CD4-positive, alpha-beta T cell (primary cell): ENCODE measurements at regions of chr9 and their contacts with region 1.

Region 1: GRCh38 chr9:76188286-76188685 is 205.9 kb downstream of the RFK start:
- DNase-seq: no peak
- ATAC-seq: no peak
- H3K4me3 ChIP-seq: no peak overlapping the region
- H3K4me3 Mint-ChIP-seq: no peak overlapping the region
- H3K27ac ChIP-seq: no peak overlapping the region
- H3K27ac Mint-ChIP-seq: no peak overlapping the region
- H3K4me1 ChIP-seq: no peaks in the 10 kb centered on the region
- H3K4me1 Mint-ChIP-seq: no peaks in the 10 kb centered on the region
- H3K27me3 ChIP-seq: no peaks in the 10 kb centered on the region
- H3K27me3 Mint-ChIP-seq: no peaks in the 10 kb centered on the region
- CTCF ChIP-seq: no peak

Region 2: DNA sequence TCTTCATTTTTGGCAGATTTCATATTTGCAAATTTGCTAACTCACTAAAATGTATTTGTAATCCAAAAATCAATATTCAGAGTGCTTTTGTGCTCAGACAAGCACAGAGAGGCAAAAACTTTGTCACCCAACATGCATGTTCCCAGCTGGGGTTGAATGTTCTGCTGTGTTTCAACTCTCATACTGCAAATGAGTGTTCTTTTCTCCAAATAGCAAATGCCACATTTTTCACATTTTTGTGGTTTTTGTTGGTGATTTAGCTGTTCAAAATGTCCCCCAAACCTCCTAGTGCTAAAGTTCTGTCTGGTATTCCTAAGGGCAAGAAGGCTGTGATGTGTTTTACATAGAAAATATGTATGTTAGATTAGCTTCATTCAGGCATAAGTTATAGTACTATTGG is 385.2 kb before region 1 on chr9:
- CTCF ChIA-PET with region 1: no interaction called
- POLR2A ChIA-PET with region 1: no interaction called
- intact Hi-C with region 1: no loop called
- DNase-seq: no peak
- ATAC-seq: no peak
- H3K4me3 ChIP-seq: no peak overlapping the region
- H3K4me3 Mint-ChIP-seq: no peak overlapping the region
- H3K27ac ChIP-seq: no peak overlapping the region
- H3K27ac Mint-ChIP-seq: no peak overlapping the region
- H3K4me1 ChIP-seq: no peaks in the 10 kb centered on the region
- H3K4me1 Mint-ChIP-seq: no peaks in the 10 kb centered on the region
- H3K27me3 ChIP-seq: no peaks in the 10 kb centered on the region
- H3K27me3 Mint-ChIP-seq: peaks cover 10% of the 10 kb centered on the region
- CTCF ChIP-seq: no peak

Region 3: DNA sequence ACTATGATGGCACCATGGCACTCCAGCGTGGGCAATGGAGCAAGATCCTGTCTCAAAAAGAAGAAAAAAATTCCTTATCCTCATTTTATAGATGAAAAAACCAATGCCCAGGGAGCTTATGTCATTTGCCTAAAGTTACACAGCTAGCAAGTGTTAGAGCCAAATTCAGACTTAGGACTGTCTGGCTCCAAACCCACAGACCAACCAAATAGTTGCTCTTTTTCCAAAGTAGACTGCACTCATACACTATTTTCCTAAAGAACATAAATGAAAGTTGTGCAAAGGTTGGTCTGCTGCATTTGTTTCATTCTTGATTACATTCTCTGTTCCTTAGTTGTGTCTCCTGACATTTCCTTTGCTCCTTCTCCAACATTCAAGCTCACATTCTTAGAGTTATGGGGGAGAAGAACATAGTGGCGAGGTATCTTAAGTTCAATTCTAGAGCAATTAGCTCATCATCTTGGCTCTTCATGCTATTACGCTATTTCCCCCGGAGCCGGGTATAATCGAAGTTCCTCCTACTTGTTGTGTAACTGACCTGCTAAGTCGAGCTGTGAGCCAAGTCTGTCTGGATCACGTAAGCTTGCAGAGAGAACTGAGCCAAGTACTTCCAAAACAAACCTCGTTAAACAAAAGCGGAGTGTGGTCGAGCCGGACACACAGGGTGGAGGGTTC is 67.6 kb after region 1 on chr9:
- CTCF ChIA-PET with region 1: no interaction called
- POLR2A ChIA-PET with region 1: no interaction called
- intact Hi-C with region 1: loop called in 1 of 2 experiments (anchors 2 kb)
- DNase-seq: peak in 1 of 14 experiments; percentile 6
- ATAC-seq: no peak
- H3K4me3 ChIP-seq: no peak overlapping the region
- H3K4me3 Mint-ChIP-seq: no peak overlapping the region
- H3K27ac ChIP-seq: no peak overlapping the region
- H3K27ac Mint-ChIP-seq: no peak overlapping the region
- H3K4me1 ChIP-seq: no peaks in the 10 kb centered on the region
- H3K4me1 Mint-ChIP-seq: no peaks in the 10 kb centered on the region
- H3K27me3 ChIP-seq: peaks cover 0 to 3% of the 10 kb centered on the region in 2 experiments
- H3K27me3 Mint-ChIP-seq: no peaks in the 10 kb centered on the region
- CTCF ChIP-seq: no peak